Mammary epithelial cell (primary cell): ENCODE measurements at regions of chr10 and their contacts with region 1.

Region 1: DNA sequence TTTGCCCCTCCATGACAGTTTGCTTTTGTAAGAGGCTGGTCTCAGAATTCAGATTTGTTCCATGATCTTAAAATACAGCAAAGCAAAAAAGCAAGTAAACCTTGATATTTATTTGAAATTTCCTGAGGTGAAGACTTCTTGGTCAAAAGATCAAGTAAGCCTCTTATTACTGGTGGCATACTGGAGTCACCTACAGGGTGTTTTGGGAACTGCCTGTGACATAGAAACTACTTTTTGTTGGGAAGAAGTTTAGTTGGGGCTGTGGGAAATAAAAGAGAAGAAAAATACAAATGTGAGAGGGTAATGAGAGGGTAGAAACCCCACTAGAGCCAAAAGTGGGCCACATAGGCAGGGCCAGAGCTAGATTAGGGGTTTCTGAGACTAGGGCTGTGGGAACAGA is 217.9 kb downstream of the OTUD1 start:
- DNase-seq: peak; percentile 11
- H3K4me3 ChIP-seq: no peak overlapping the region
- H3K27ac ChIP-seq: no peak overlapping the region
- H3K4me1 ChIP-seq: no peaks in the 10 kb centered on the region
- H3K27me3 ChIP-seq: no peaks in the 10 kb centered on the region
- CTCF ChIP-seq: peak; percentile 59 to 70

Region 2: GRCh38 chr10:23535381-23535780 is 121.4 kb before region 1 on chr10:
- CTCF ChIA-PET with region 1: no interaction called
- dilution Hi-C with region 1: no loop called
- in situ Hi-C with region 1: no loop called
- intact Hi-C with region 1: loop called (anchors 2 kb)
- DNase-seq: no peak
- H3K4me3 ChIP-seq: no peak overlapping the region
- H3K27ac ChIP-seq: no peak overlapping the region
- H3K4me1 ChIP-seq: no peaks in the 10 kb centered on the region
- H3K27me3 ChIP-seq: no peaks in the 10 kb centered on the region
- CTCF ChIP-seq: peak; percentile 8 to 55